ENCODE measurements at regions of chr16 and their contacts with region 1.

Region 1: GRCh38 chr16:9365376-9365728 is 273.9 kb downstream of the HAPSTR1 start:
- DNase-seq: peak in 4 of 5 donors; percentile 71 to 89 (median 81)
- ATAC-seq: peak; percentile 90 to 94 (median 93)
- H3K4me3 ChIP-seq: no peak overlapping the region
- H3K27ac ChIP-seq: peak overlapping the region in 10 of 12 donors; percentile 51 to 82 (median 66)
- H3K4me1 ChIP-seq: peaks cover 0 to 26% (median 5%) of the 10 kb centered on the region in 12 donors
- H3K27me3 ChIP-seq: no peaks in the 10 kb centered on the region
- CTCF ChIP-seq: no peak
- POLR2A ChIP-seq: no peak

Region 2: GRCh38 chr16:9441012-9441411 is 75.7 kb after region 1 on chr16:
- intact Hi-C with region 1: loop called in 2 of 10 experiments (anchors 2 to 5 kb)
- DNase-seq: no peak
- ATAC-seq: no peak
- H3K4me3 ChIP-seq: no peak overlapping the region
- H3K27ac ChIP-seq: no peak overlapping the region
- H3K4me1 ChIP-seq: no peaks in the 10 kb centered on the region
- H3K27me3 ChIP-seq: no peaks in the 10 kb centered on the region
- CTCF ChIP-seq: no peak
- POLR2A ChIP-seq: no peak